ENCODE measurements at regions of chr17 and their contacts with region 1.

Region 1: DNA sequence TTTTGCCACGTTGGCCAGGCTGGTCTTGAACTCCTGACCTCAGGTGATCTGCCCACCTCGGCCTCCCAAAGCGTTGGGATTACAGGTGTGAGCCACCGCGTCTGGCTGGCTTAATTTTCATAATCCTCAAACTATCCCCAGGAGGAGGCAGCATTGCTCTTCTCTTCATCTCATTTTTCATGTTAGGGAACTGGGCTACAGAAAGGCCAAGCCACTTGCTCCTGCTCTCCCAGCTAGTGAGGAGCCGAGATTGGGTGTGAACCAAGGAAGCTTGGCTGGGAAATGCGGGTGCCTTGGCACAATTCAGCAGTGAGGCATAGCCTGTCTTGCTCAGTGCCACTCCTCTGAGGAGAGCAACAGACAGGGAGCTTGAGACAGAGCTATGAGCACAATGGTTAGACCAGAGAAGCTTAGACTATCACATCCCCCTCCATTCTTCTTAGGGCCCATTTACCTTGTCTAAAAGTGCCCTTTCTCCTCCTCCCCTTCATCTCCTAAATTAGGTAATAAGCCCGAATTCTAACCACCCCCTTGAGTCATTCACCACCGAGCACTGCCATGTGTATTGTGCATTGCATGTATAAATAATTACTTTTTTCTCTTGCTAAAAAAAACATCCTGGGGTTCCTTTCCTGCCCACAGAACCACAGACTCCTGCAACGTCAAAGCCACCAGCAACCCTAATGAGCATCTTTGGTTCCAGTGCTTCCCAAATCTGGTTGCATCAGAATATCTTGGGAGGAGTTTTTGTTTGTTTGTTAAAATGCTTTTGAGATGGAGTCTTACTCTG is 20.0 kb upstream of the KIF19 start:
- DNase-seq: no peak
- H3K4me3 Mint-ChIP-seq: no peak overlapping the region
- H3K27ac Mint-ChIP-seq: no peak overlapping the region
- H3K4me1 Mint-ChIP-seq: peaks cover 10% of the 10 kb centered on the region
- H3K27me3 Mint-ChIP-seq: no peaks in the 10 kb centered on the region

Region 2: DNA sequence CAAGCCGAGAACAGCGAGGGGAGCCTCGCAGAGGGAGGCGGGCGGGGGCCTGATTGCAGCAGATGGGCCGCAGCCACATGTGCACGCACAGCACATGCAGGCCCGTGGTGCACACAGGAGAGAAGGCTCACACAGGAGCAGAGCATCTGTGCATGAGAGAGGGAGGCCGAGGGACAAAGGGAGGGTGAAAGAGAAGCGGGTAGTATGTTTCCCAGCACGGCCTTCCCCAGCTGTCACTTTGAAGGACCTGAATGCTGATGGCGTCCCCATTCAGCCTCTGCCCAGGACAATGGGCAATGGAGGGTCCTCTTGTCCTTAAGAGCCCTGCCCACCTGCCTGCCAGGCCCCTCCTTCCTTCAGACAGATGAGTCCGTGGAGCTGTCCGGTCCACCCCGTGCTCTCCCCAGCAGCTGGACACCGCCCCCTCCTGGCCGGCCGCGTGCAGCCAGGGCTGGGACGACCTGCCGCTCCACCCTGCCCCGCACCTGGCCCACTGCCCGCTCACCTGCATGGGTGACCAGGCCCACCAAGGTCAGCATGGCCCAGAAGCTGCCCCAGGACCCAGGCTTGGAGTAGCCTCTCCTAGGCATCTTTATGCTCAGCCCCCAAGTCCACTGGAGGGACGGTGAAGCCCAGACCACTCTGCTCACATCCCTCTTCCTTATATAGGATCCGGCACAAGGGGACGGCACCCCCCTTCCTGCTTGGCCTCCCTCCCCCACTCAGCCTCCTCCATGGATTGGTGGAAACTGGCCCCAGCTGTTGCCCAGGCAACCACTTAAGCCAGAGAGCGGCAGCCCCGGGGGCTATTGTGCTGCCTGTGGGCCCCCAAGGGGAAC is 55.4 kb after region 1 on chr17 and contains the start of gene BTBD17:
- CTCF ChIA-PET with region 1: interaction called, 32 read pairs
- POLR2A ChIA-PET with region 1: no interaction called
- intact Hi-C with region 1: no loop called
- DNase-seq: peak; percentile 63
- H3K4me3 Mint-ChIP-seq: no peak within 1 kb of the TSS
- H3K27ac Mint-ChIP-seq: no peak within 1 kb of the TSS
- H3K4me1 Mint-ChIP-seq: peaks cover 2% of the 10 kb centered on the region
- H3K27me3 Mint-ChIP-seq: peaks cover 23% of the 10 kb centered on the region
- total RNA-seq, gene BTBD17: not detected

Measured in activated CD4-positive, alpha-beta memory T cell treated with anti-CD3 and anti-CD28 coated beads for 36 hours (primary cell).